Activated naive CD4-positive, alpha-beta T cell treated with anti-CD3 and anti-CD28 coated beads for 36 hours (primary cell): ENCODE measurements at regions of chr6 and their contacts with region 1.

Region 1: GRCh38 chr6:148947621-148948444 is 201.0 kb downstream of the UST start:
- DNase-seq: peak; percentile 89
- H3K4me3 Mint-ChIP-seq: no peak overlapping the region
- H3K27ac Mint-ChIP-seq: no peak overlapping the region
- H3K4me1 Mint-ChIP-seq: no peaks in the 10 kb centered on the region
- H3K27me3 Mint-ChIP-seq: peaks cover 2% of the 10 kb centered on the region

Region 2: DNA sequence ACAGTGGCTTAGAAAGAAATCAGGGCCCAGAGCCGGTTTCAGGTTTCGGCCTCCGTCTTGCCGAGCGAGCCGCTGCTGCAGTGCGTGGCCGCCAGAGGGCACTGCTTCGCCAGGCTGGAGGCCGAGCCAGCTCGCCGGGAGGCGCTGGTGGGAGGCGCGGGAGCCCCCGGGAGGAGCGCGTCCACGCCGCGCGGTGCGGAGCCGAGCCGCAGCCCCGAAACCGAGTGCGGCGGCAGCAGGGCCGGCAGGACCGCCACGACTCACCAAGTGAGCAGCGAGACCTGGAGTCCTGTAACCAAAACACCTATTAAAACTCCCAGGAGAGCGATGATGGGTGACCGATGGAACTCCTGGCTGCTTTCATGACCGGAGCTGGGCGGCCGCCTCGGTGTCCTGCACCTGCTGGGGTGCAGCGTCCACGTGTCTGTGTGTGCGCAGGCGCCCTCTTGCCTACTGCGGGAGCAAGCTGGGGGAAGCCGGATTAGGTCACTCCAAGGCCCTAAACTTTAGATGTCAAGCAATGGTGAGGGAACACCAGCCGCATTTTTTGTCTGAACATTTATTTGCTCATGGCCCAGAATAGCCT is 387.9 kb before region 1 on chr6:
- CTCF ChIA-PET with region 1: interaction called, 4 read pairs
- intact Hi-C with region 1: loop called (anchors 1 kb)
- DNase-seq: peak; percentile 64
- H3K4me3 Mint-ChIP-seq: no peak overlapping the region
- H3K27ac Mint-ChIP-seq: no peak overlapping the region
- H3K4me1 Mint-ChIP-seq: peaks cover 4% of the 10 kb centered on the region
- H3K27me3 Mint-ChIP-seq: peaks cover 18% of the 10 kb centered on the region

Region 3: DNA sequence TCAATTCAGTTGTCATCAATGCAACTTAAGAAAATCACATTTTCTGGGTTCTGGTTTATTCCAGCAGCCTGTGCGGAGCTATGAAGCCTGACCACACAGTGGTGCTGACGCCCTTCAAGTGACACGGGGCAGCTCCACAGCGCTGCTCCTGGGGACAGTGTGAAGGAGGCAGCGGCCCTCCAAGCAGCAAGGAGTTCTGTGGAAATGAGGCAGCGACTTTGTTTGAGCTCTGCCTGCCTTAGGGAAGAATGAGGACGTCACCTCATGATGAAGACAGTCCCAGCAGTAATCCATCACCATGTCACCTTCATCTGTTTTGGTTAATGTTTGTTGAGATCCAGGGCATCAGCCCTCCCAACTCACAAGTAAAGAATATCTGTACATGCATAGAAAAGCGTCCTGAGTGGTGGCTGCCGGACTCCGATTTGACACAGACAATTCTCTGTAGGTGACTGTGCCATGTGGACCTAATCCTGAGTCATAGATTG is 369.5 kb before region 1 on chr6:
- CTCF ChIA-PET with region 1: interaction called, 3 read pairs
- intact Hi-C with region 1: loop called (anchors 1 kb)
- DNase-seq: peak; percentile 68
- H3K4me3 Mint-ChIP-seq: no peak overlapping the region
- H3K27ac Mint-ChIP-seq: no peak overlapping the region
- H3K4me1 Mint-ChIP-seq: no peaks in the 10 kb centered on the region
- H3K27me3 Mint-ChIP-seq: peaks cover 24% of the 10 kb centered on the region

Region 4: DNA sequence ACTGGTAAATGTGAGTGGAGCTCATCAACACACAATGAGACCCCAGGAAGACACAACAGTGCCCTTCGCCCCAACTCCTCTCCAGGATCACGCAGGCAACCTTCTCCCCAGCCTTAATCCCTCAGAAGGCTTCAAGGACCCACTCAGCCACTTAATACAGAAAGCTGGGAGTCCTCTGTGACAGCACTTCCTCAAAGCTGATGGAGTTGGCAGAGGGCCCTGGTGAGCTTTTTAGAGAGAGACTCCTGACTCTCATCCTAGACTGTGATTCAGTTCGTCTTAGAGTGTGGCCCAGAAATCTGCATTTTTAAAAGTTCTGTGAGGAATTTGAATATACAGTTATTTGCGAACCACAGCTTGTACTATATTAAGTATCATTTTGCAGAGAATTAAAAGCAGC is 13.3 kb before region 1 on chr6:
- CTCF ChIA-PET with region 1: interaction called, 10 read pairs
- intact Hi-C with region 1: no loop called
- DNase-seq: no peak
- H3K4me3 Mint-ChIP-seq: no peak overlapping the region
- H3K27ac Mint-ChIP-seq: no peak overlapping the region
- H3K4me1 Mint-ChIP-seq: no peaks in the 10 kb centered on the region
- H3K27me3 Mint-ChIP-seq: peaks cover 7% of the 10 kb centered on the region

Region 5: GRCh38 chr6:149779644-149779963 is 831.8 kb after region 1 on chr6:
- CTCF ChIA-PET with region 1: no interaction called
- intact Hi-C with region 1: no loop called
- DNase-seq: no peak
- H3K4me3 Mint-ChIP-seq: no peak overlapping the region
- H3K27ac Mint-ChIP-seq: no peak overlapping the region
- H3K4me1 Mint-ChIP-seq: no peaks in the 10 kb centered on the region
- H3K27me3 Mint-ChIP-seq: no peaks in the 10 kb centered on the region